ENCODE measurements at regions of chr1 and their contacts with region 1.

Region 1: DNA sequence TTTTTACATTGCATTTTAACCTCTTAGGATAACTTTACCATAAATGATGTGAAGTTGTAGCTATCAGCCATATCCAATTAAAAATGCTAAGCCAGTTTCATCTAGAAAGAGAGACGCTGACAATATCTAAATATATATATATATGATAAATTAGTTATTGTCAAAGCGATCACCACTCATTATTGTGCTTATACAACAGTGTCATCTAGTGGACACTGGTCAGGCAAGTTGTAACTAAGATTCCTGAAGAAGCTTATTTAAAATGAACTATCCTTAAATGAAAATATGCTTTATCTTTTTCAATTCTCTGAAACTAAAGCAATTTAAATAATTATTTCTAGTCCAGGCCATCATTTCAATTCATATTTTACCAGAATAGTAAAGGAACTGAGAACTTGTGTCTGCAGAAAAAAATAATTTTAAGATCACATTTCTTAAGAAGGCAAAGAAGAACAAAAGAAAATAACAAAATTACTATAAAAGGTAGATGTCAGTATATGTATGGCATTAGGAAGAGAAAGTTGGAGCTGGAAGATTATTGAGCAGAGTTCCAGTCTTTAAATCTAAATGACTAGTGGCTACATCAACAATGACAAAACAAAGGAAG is 193.3 kb upstream of the SNX7 start:
- DNase-seq: peak; percentile 44
- ATAC-seq: 0 out of 2 replicates have a peak, but pooled peaks have one; percentile 53
- H3K4me3 ChIP-seq: no peak overlapping the region
- H3K27ac ChIP-seq: no peak overlapping the region
- H3K4me1 ChIP-seq: no peaks in the 10 kb centered on the region
- H3K27me3 ChIP-seq: no peaks in the 10 kb centered on the region
- CTCF ChIP-seq: peak; percentile 51 to 77 (median 64); a peak in 5 of 6 replicates
- POLR2A ChIP-seq: no peak
- RAD21 ChIP-seq: peak; percentile 82

Region 2: DNA sequence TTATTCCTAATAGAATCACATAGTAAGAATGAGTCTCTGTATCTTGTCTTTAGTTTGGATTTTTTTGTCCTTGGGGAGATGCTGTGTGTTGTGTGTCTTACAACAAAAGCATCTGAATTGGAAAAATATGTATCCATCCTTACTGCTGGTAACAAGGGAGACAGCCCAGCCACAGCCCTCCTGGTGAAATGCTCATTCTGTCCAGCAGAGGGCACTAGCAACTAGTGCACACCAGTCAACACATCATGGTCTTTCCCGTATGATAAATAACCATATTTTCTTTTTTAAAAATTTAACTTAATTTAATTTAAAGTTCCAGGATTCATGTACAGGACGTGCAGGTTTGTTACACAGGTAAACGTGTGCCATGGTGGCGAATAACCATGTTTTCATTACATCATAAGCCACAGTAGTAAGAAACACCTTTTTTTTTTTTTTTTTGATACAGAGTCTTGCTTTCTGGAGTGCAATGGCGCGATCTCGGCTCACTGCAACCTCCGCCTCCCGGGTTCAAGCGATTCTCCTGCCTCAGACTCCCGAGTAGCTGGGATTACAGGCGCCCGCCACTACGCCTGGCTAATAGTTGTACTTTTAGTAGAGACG is 1501.6 kb before region 1 on chr1:
- CTCF ChIA-PET with region 1: no interaction called
- POLR2A ChIA-PET with region 1: no interaction called
- RAD21 ChIA-PET with region 1: no interaction called
- intact Hi-C with region 1: loop called (anchors 1 kb)
- DNase-seq: peak; percentile 59
- ATAC-seq: peak; percentile 94
- H3K4me3 ChIP-seq: no peak overlapping the region
- H3K27ac ChIP-seq: no peak overlapping the region
- H3K4me1 ChIP-seq: no peaks in the 10 kb centered on the region
- H3K27me3 ChIP-seq: no peaks in the 10 kb centered on the region
- CTCF ChIP-seq: peak; percentile 40 to 90 (median 72); a peak in 5 of 6 replicates
- POLR2A ChIP-seq: no peak
- RAD21 ChIP-seq: peak; percentile 73

Region 3: DNA sequence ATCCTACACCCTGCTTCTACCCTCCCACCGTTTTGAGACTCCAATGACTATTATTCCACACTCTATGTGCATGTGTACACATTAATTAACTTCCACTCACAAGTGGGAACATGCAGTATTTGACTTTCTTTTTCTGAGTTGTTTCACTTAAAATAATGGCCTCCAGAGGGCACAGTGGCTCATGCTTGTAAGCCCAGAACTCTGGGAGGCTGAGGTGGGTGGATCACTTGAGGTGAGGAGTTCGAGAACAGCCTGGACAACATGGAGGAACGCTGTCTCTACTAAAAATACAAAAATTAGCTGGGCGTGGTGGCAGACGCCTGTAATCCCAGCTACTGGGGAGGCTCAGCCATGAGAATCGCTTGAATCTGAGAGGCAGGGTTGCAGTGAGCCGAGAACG is 1281.8 kb before region 1 on chr1:
- CTCF ChIA-PET with region 1: no interaction called
- POLR2A ChIA-PET with region 1: no interaction called
- RAD21 ChIA-PET with region 1: no interaction called
- intact Hi-C with region 1: loop called (anchors 5 kb)
- DNase-seq: peak; percentile 29
- ATAC-seq: peak; percentile 69
- H3K4me3 ChIP-seq: no peak overlapping the region
- H3K27ac ChIP-seq: no peak overlapping the region
- H3K4me1 ChIP-seq: peaks cover 0 to 5% of the 10 kb centered on the region in 2 experiments; a peak in 1 of 4 replicates
- H3K27me3 ChIP-seq: no peaks in the 10 kb centered on the region
- CTCF ChIP-seq: peak; percentile 33 to 50 (median 39); a peak in 5 of 6 replicates
- POLR2A ChIP-seq: no peak
- RAD21 ChIP-seq: peak; percentile 65

Region 4: GRCh38 chr1:97524211-97524610 is 944.0 kb before region 1 on chr1:
- CTCF ChIA-PET with region 1: no interaction called
- POLR2A ChIA-PET with region 1: no interaction called
- RAD21 ChIA-PET with region 1: interaction called in 1 of 2 experiments, 3 read pairs
- intact Hi-C with region 1: loop called (anchors 10 kb)
- DNase-seq: no peak
- ATAC-seq: no peak
- H3K4me3 ChIP-seq: no peak overlapping the region
- H3K27ac ChIP-seq: no peak overlapping the region
- H3K4me1 ChIP-seq: no peaks in the 10 kb centered on the region
- H3K27me3 ChIP-seq: no peaks in the 10 kb centered on the region
- CTCF ChIP-seq: no peak
- POLR2A ChIP-seq: no peak
- RAD21 ChIP-seq: no peak

Region 5: DNA sequence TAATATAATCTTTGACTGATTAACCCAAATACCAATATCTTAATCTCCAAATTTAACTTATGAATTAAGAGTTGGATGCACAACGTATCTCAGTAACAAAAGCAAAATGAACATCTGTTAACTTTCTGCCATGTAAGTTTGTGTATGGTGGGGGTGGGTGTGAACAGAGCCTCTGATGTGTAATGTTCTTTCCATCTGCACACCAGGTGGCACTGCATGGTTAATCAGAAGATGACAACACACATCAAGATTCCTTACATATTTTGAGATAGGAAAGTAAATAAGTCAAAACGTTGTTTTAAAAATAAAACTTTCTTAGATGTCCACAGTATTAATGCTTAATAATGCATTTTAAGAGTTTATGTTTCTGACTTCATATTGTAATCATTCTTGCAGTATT is 799.3 kb before region 1 on chr1:
- CTCF ChIA-PET with region 1: no interaction called
- POLR2A ChIA-PET with region 1: no interaction called
- RAD21 ChIA-PET with region 1: no interaction called
- intact Hi-C with region 1: loop called (anchors 5 kb)
- DNase-seq: peak; percentile 16
- ATAC-seq: peak; percentile 69; the same call in 1 of the 2 replicates
- H3K4me3 ChIP-seq: no peak overlapping the region
- H3K27ac ChIP-seq: no peak overlapping the region
- H3K4me1 ChIP-seq: no peaks in the 10 kb centered on the region
- H3K27me3 ChIP-seq: no peaks in the 10 kb centered on the region
- CTCF ChIP-seq: peak; percentile 18 to 46 (median 24); a peak in 4 of 6 replicates
- POLR2A ChIP-seq: no peak
- RAD21 ChIP-seq: peak; percentile 53

Region 6: DNA sequence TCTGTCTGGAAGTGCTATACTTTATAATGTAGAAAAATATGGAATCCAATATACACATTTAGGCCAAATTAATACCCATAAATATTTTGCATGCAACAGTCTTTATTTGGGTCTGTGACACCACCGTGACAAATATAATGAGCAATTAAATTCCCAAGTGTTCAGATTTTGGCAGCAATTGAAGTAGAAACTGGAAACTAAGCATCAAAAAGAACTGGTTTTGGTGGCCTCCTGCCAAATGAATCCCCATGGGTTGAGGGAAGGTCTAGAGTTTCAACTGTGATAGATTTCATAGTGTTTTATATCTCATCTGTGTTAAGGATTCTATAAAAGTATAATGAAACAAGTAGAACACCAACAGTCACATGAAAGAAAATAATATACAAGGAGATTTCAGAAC is 635.7 kb before region 1 on chr1:
- CTCF ChIA-PET with region 1: interaction called, 3 read pairs
- POLR2A ChIA-PET with region 1: no interaction called
- RAD21 ChIA-PET with region 1: no interaction called
- intact Hi-C with region 1: loop called (anchors 10 kb)
- DNase-seq: no peak
- ATAC-seq: no peak
- H3K4me3 ChIP-seq: no peak overlapping the region
- H3K27ac ChIP-seq: no peak overlapping the region
- H3K4me1 ChIP-seq: no peaks in the 10 kb centered on the region
- H3K27me3 ChIP-seq: no peaks in the 10 kb centered on the region
- CTCF ChIP-seq: no peak
- POLR2A ChIP-seq: no peak
- RAD21 ChIP-seq: no peak

Region 7: DNA sequence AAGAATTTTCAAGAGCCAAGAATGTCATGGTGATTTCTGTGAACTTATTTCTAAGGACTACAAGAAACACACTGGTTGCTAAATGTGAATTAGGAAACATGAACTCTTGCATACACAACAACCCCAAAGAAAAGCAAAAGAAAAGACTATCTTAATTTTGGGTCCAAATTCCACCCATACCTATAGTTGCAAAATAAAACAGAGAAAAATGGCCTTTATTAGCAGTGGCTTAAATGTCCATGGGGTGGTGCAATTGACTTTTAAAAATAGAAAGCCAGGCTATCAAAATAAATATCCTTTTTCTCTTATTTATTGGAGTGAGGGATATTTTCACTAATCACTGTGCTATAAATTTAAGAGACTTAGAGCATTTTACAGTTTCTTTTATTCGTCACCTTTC is 466.4 kb before region 1 on chr1:
- CTCF ChIA-PET with region 1: interaction called, 10 read pairs
- POLR2A ChIA-PET with region 1: no interaction called
- RAD21 ChIA-PET with region 1: interaction called, 3 read pairs
- intact Hi-C with region 1: loop called (anchors 2 kb)
- DNase-seq: no peak
- ATAC-seq: no peak
- H3K4me3 ChIP-seq: no peak overlapping the region
- H3K27ac ChIP-seq: no peak overlapping the region
- H3K4me1 ChIP-seq: no peaks in the 10 kb centered on the region
- H3K27me3 ChIP-seq: no peaks in the 10 kb centered on the region
- CTCF ChIP-seq: peak in 2 of 3 experiments; percentile 17 to 47; a peak in 3 of 6 replicates
- POLR2A ChIP-seq: no peak
- RAD21 ChIP-seq: peak; percentile 43; the same call in 1 of the 2 replicates